HEK293 (cell line): ENCODE measurements at regions of chr9 and their contacts with region 1.

Region 1: GRCh38 chr9:36862206-36863145 is 171.6 kb downstream of the PAX5 start:
- H3K4me3 ChIP-seq: no peak overlapping the region
- H3K27ac ChIP-seq: no peak overlapping the region
- H3K4me1 ChIP-seq: no peaks in the 10 kb centered on the region
- CTCF ChIP-seq: peak; percentile 35; the same call in 1 of the 2 replicates

Region 2: GRCh38 chr9:36913393-36914211 is 51.1 kb after region 1 on chr9:
- CTCF ChIA-PET with region 1: interaction called, 11 read pairs
- POLR2A ChIA-PET with region 1: no interaction called
- H3K4me3 ChIP-seq: no peak overlapping the region
- H3K27ac ChIP-seq: no peak overlapping the region
- H3K4me1 ChIP-seq: peaks cover 8% of the 10 kb centered on the region; the same call in 1 of the 2 replicates
- CTCF ChIP-seq: no peak

Region 3: DNA sequence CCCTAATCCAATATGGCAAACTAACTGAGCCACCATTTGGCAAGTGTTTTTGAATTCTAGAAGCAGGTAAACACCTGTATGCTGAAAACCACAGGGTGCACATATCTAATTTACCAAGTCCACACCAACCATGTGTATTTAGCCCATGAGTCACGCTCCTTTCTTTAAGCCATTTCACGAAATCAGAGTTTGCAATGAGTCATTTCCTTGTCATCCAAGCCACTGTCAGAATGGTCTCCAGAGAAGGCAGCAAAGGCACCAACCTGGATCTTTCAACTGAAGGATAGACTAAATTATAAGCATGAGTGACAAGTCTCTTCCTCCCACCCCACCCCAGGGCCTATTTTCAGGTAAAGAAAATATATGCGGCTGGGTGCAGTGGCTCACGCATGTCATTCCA is 61.6 kb after region 1 on chr9:
- CTCF ChIA-PET with region 1: no interaction called
- POLR2A ChIA-PET with region 1: no interaction called
- H3K4me3 ChIP-seq: no peak overlapping the region
- H3K27ac ChIP-seq: no peak overlapping the region
- H3K4me1 ChIP-seq: peaks cover 17% of the 10 kb centered on the region
- CTCF ChIP-seq: no peak